ENCODE measurements at regions of chr16 and their contacts with region 1.

Region 1: DNA sequence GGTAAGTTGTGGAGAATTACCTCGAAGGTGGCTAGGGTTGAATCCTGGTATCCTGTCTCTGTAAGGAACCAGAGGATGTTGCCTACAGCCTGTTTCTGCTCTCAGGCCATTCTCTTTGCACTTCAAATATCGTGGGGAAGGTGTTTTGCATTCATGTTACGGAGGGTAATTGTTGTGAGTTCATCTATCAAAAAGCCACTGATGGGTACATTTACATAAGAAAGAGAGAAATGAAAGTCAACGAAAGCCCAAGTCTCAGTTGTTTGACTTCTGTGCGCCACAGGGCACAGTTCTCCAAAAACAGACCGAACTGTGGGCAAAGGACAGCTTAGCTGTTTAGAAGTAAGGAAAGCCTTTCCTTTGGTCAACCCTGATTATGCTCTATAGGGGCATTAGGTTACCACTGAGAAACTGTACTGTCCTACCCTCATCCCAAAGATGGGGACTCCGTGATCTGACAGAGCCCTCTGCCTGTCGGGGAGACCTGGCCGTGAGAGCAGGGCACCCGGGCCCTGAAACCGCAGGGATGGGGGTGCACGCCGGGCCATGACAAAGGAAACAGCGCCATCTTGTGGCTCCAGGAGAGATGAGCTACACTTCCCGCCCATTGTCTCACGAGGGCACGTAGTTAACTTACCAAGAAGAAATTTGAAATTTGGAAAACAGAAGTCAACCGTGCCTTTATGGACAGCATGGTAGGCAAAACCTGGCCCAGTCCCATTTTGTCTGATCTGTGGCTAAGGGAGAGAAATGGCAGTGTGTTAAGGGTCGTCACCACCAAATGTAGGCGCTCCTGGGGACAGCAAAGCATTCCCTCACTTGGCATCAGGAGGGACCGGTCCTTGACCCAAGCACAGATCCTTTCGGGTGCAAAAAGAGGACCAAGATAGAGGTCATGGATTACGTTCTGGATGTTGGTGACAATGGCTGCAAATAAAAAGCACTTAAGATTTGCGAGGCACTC is 74.5 kb upstream of the DYNLRB2 start:
- DNase-seq: peak; percentile 62 to 66
- ATAC-seq: peak; percentile 90 to 99
- H3K4me3 ChIP-seq: no peak overlapping the region
- H3K27ac ChIP-seq: no peak overlapping the region
- H3K4me1 ChIP-seq: no peaks in the 10 kb centered on the region
- CTCF ChIP-seq: peak; percentile 82
- EP300 ChIP-seq: no peak
- POLR2A ChIP-seq: no peak
- RAD21 ChIP-seq: peak; percentile 94

Region 2: GRCh38 chr16:80447241-80447640 is 19.1 kb before region 1 on chr16:
- CTCF ChIA-PET with region 1: interaction called, 21 read pairs
- POLR2A ChIA-PET with region 1: no interaction called
- DNase-seq: no peak
- ATAC-seq: no peak
- H3K4me3 ChIP-seq: no peak overlapping the region
- H3K27ac ChIP-seq: no peak overlapping the region
- H3K4me1 ChIP-seq: no peaks in the 10 kb centered on the region
- CTCF ChIP-seq: no peak
- EP300 ChIP-seq: no peak
- POLR2A ChIP-seq: no peak
- RAD21 ChIP-seq: no peak

Region 3: GRCh38 chr16:80477838-80478237 is 11.5 kb after region 1 on chr16:
- CTCF ChIA-PET with region 1: interaction called, 23 read pairs
- POLR2A ChIA-PET with region 1: no interaction called
- DNase-seq: no peak
- ATAC-seq: no peak
- H3K4me3 ChIP-seq: no peak overlapping the region
- H3K27ac ChIP-seq: no peak overlapping the region
- H3K4me1 ChIP-seq: no peaks in the 10 kb centered on the region
- CTCF ChIP-seq: no peak
- EP300 ChIP-seq: no peak
- POLR2A ChIP-seq: no peak
- RAD21 ChIP-seq: no peak

Measured in A549 (cell line).